GM12878 (cell line): ENCODE measurements at regions of chr1 and their contacts with region 1.

Region 1: DNA sequence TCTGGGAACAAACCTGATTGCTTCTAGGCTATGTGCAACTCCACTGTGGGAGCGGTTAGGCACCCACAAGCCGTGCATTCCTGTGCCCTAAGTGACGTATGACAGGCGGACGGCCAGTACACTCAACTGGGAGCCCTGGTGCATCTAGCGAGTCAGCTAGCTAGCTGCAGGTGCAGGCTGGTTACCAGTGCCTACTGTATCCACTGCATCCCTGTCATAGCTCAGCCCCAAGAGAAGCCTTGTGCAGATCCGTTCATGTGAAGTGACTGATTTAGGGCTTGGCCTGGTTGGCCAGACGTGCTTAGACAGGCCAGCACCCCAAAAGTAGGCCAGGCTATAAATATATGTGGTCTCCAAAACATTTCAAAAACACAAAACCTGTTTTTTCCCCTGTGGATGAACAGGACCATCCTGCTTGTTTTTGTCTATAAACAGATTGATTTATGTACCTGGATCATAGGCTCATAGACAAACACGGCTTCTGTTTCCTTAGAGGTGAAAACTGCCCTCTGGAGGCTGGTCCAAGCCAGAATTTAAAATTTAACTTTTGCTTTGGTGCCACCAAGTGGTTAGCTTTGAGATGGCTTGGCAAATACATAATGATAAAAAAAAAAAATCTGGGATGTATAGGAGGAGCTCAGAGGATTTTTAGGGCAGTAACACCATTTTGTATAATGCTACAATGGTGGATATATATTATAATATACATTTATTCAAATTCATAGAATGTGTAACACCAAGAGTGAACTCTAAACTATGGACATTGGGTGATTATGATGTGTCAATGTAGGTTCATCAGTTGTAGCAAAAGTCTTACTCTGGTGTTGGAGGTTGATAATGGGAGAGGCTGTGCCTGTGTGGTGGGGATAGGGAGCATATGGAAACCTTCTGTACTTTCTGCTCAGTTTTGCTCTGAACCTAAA is 68.5 kb downstream of the GIPC2 start:
- DNase-seq: peak; percentile 38
- ATAC-seq: peak; percentile 93
- H3K4me3 ChIP-seq: no peak overlapping the region
- H3K27ac ChIP-seq: no peak overlapping the region
- H3K4me1 ChIP-seq: peaks cover 6% of the 10 kb centered on the region
- H3K27me3 ChIP-seq: no peaks in the 10 kb centered on the region
- CTCF ChIP-seq: peak; percentile 67 to 100 (median 86); a peak in 5 of 6 replicates
- EP300 ChIP-seq: no peak
- POLR2A ChIP-seq: no peak
- RAD21 ChIP-seq: peak; percentile 99

Region 2: DNA sequence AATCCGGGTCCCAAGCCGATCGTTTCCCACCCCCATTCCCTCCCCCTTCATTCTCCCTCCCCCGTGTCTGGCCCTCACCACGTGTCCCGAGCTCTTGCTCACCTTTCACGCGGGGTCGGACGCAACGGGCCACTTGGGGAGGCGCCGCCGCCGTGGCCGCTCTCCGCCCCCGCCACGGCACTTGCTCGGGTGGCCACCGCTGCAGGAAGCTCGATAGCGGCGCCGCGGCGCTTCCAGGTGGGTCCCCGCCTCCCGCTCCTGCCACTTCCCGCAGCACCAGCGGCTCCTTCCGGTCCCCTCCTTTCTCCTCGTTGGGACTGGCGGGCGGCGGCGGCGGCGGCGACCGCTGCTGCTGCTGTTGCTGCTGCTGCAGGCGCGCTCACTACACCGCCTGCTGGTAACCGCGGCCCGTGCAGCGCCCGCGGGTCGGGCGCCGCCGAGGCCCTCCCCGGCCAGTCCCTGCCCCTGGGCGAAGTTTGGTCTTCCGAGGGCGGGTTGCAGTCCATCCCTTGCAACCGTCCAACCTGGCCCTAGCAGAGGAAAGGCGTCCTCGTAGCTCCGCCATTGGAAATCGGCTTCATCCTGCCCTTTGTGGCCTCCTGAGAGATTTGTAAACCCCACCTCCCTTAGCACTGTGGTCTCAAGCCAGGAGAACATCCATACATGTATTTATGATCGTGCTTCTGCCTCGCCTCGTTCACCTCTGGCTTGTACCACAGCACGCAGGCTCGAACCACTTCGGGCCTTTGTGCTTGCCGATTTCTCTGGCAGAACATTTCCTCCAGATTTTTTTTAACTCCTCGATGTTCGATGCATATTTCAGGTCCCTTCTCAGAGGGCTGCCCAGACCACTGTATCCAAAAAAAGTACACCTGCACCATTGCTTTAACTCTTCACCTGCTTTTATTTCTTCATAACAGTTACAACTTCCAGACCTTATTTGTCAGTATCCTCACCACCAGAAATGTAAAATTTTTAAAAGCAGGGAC is 430.8 kb before region 1 on chr1:
- CTCF ChIA-PET with region 1: no interaction called
- POLR2A ChIA-PET with region 1: no interaction called
- RAD21 ChIA-PET with region 1: no interaction called
- SMC1A ChIA-PET with region 1: no interaction called
- in situ Hi-C with region 1: no loop called
- intact Hi-C with region 1: loop called (anchors 2 kb)
- DNase-seq: peak; percentile 45
- ATAC-seq: peak; percentile 84
- H3K4me3 ChIP-seq: peak overlapping the region; percentile 71
- H3K27ac ChIP-seq: peak overlapping the region; percentile 88
- H3K4me1 ChIP-seq: 0 out of 2 replicates have a peak, but pooled peaks cover 3% of the 10 kb centered on the region
- H3K27me3 ChIP-seq: no peaks in the 10 kb centered on the region
- CTCF ChIP-seq: peak; percentile 77 to 84 (median 80); a peak in 5 of 6 replicates
- EP300 ChIP-seq: no peak
- POLR2A ChIP-seq: peak; percentile 89
- RAD21 ChIP-seq: peak; percentile 47

Region 3: GRCh38 chr1:77948841-77949424 is 165.4 kb before region 1 on chr1:
- CTCF ChIA-PET with region 1: interaction called, 5 read pairs
- POLR2A ChIA-PET with region 1: no interaction called
- RAD21 ChIA-PET with region 1: no interaction called
- SMC1A ChIA-PET with region 1: interaction called, 10 read pairs
- in situ Hi-C with region 1: no loop called
- intact Hi-C with region 1: loop called (anchors 5 kb)
- DNase-seq: no peak
- ATAC-seq: peak; percentile 49
- H3K4me3 ChIP-seq: no peak overlapping the region
- H3K27ac ChIP-seq: no peak overlapping the region
- H3K4me1 ChIP-seq: peaks cover 16% of the 10 kb centered on the region
- H3K27me3 ChIP-seq: no peaks in the 10 kb centered on the region
- CTCF ChIP-seq: peak; percentile 13 to 21 (median 19); a peak in 3 of 6 replicates
- EP300 ChIP-seq: no peak
- POLR2A ChIP-seq: no peak
- RAD21 ChIP-seq: no peak

Region 4: GRCh38 chr1:78004719-78005447 is 109.4 kb before region 1 on chr1 and contains the start of gene DNAJB4:
- CTCF ChIA-PET with region 1: interaction called, 26 read pairs
- POLR2A ChIA-PET with region 1: no interaction called
- RAD21 ChIA-PET with region 1: interaction called, 13 read pairs
- SMC1A ChIA-PET with region 1: interaction called, 8 read pairs
- in situ Hi-C with region 1: no loop called
- intact Hi-C with region 1: loop called (anchors 1 kb)
- DNase-seq: peak; percentile 96
- ATAC-seq: peak; percentile 88
- H3K4me3 ChIP-seq: peak within 1 kb of the TSS; percentile 78
- H3K27ac ChIP-seq: peak within 1 kb of the TSS; percentile 94
- H3K4me1 ChIP-seq: no peaks in the 10 kb centered on the region
- H3K27me3 ChIP-seq: no peaks in the 10 kb centered on the region
- CTCF ChIP-seq: no peak
- EP300 ChIP-seq: no peak
- POLR2A ChIP-seq: peak; percentile 72
- RAD21 ChIP-seq: no peak
- polyA plus RNA-seq, gene DNAJB4: 3.8 to 5.1 TPM

Region 5: GRCh38 chr1:78032996-78033796 is 81.1 kb before region 1 on chr1:
- CTCF ChIA-PET with region 1: no interaction called
- POLR2A ChIA-PET with region 1: no interaction called
- RAD21 ChIA-PET with region 1: no interaction called
- SMC1A ChIA-PET with region 1: no interaction called
- in situ Hi-C with region 1: no loop called
- intact Hi-C with region 1: no loop called
- DNase-seq: no peak
- ATAC-seq: no peak
- H3K4me3 ChIP-seq: no peak overlapping the region
- H3K27ac ChIP-seq: no peak overlapping the region
- H3K4me1 ChIP-seq: no peaks in the 10 kb centered on the region
- H3K27me3 ChIP-seq: no peaks in the 10 kb centered on the region
- CTCF ChIP-seq: no peak
- EP300 ChIP-seq: no peak
- POLR2A ChIP-seq: no peak
- RAD21 ChIP-seq: no peak

Region 6: DNA sequence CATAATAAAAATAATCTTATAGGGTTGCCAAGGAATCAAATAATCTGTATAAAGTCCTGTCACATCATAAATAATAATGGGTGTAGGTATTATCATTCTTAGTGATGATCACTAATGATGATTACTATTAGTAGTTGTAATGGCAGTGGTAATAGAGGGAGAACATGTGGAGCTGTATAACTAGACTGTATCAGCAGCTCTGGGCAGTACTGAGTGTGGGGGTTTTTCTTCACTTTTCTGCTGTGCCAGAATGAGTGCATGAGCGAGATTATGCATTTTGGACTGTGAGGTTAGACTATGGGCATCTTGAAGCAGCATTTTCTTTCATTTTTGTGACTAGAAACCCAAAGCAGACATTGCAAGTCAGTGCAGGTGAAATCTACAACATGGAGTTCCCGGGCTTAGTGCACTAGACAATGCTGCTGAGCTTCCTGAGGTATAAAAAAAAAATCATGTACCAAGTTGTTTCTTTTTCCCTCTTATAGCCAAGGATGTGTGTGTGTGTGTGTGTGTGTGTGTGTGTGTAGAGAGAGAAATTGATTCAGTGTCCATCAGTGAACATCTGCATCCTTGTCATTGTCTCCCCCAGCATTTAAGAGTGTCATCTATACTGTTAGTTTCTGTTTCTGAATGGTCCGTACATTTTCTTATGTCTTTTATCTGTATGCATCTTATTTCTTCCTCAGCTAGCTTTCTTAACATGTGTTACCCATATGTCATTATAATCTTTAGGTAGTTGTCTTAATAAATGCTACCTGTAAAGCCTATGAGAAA is 18.1 kb after region 1 on chr1:
- CTCF ChIA-PET with region 1: interaction called, 12 read pairs
- POLR2A ChIA-PET with region 1: no interaction called
- RAD21 ChIA-PET with region 1: no interaction called
- SMC1A ChIA-PET with region 1: interaction called, 7 read pairs
- in situ Hi-C with region 1: no loop called
- intact Hi-C with region 1: no loop called
- DNase-seq: no peak
- ATAC-seq: peak; percentile 59
- H3K4me3 ChIP-seq: no peak overlapping the region
- H3K27ac ChIP-seq: no peak overlapping the region
- H3K4me1 ChIP-seq: no peaks in the 10 kb centered on the region; the same call in 1 of the 2 replicates
- H3K27me3 ChIP-seq: no peaks in the 10 kb centered on the region
- CTCF ChIP-seq: no peak
- EP300 ChIP-seq: no peak
- POLR2A ChIP-seq: no peak
- RAD21 ChIP-seq: no peak

Region 7: DNA sequence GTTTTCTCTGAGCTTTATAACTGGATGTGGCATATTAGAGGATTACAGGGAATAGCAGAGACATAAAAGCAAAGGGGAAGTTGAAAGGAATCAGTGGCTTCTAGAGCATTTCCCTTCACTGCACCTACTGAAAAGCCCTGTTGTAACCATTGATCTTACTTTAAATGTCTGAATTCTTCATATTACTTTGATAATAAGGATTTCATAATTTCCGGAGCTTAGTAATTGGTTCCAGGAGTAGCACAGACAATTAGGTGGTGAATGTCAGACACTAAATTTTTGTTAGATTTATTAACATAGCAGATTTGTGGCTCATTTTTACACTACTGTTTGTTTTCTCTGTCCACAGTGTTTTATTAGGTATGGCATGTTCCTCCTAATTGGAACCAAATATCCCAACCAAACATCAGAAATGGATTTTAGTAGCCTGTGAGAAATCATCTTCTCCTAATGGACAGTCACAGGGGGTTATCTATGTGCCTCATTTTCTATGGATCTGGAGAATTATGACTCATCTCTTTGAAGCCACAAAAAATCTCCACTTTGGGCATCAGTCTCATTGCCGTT is 32.0 kb after region 1 on chr1:
- CTCF ChIA-PET with region 1: no interaction called
- POLR2A ChIA-PET with region 1: no interaction called
- RAD21 ChIA-PET with region 1: no interaction called
- SMC1A ChIA-PET with region 1: no interaction called
- in situ Hi-C with region 1: no loop called
- intact Hi-C with region 1: no loop called
- DNase-seq: no peak
- ATAC-seq: no peak
- H3K4me3 ChIP-seq: no peak overlapping the region
- H3K27ac ChIP-seq: no peak overlapping the region
- H3K4me1 ChIP-seq: peaks cover 16% of the 10 kb centered on the region
- H3K27me3 ChIP-seq: no peaks in the 10 kb centered on the region
- CTCF ChIP-seq: no peak
- EP300 ChIP-seq: no peak
- POLR2A ChIP-seq: no peak
- RAD21 ChIP-seq: no peak

Region 8: GRCh38 chr1:78184460-78185072 is 70.3 kb after region 1 on chr1:
- CTCF ChIA-PET with region 1: no interaction called
- POLR2A ChIA-PET with region 1: no interaction called
- RAD21 ChIA-PET with region 1: no interaction called
- SMC1A ChIA-PET with region 1: no interaction called
- in situ Hi-C with region 1: no loop called
- intact Hi-C with region 1: no loop called
- DNase-seq: no peak
- ATAC-seq: peak; percentile 54
- H3K4me3 ChIP-seq: no peak overlapping the region
- H3K27ac ChIP-seq: no peak overlapping the region
- H3K4me1 ChIP-seq: no peaks in the 10 kb centered on the region
- H3K27me3 ChIP-seq: no peaks in the 10 kb centered on the region
- CTCF ChIP-seq: no peak
- EP300 ChIP-seq: no peak
- POLR2A ChIP-seq: no peak
- RAD21 ChIP-seq: no peak